ENCODE measurements at regions of chr5 and their contacts with region 1.

Region 1: DNA sequence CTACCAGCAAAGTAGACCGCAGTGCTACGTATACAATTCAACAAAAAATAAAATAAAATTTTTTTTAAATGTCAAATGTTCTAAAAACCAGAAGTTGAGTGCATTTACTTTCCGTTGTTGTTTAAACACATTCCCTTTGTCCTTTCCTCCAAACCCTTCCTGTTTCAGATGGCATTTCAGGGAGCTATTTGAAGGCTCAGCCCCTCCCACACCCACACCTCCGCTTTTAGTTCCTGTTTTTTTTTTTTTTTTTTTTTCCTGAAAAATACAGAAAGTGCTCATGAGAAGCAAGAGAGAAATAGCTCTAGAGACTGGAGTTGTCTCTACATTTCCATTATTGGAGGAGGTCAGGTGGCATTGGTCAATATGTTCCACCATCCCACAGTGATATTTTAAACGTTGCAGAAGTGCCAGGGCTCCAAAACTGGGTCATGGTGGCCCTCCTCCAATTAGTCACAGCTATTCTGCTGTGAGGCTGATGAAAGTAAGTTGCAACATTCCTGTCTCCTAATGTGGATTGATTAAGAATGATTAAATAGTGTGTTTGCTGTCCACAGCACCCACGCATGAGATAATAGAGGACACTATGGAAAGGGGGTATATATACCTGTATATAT is 106.9 kb downstream of the GABRG2 start:
- DNase-seq: no peak

Region 2: DNA sequence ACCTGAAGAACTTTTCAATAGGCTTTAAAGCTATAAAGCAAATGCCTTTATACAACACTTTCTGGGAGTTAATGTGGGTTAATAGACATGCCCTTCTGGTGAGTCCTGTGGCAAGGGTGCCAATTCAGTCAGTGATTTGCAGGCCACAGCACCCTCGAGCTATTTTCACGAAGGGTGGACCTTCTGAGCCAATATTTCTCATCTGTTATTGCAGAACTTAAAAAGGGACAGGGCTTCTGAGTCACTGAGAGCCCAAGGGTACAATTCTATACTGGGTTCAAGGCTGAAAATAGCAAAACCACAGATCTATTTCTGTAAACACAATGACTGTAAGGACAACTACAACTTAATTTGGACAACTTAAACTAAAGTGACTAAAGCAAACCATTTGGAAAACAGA is 14.1 kb before region 1 on chr5:
- intact Hi-C with region 1: loop called in 1 of 2 experiments (anchors 1 kb)
- DNase-seq: no peak

Region 3: DNA sequence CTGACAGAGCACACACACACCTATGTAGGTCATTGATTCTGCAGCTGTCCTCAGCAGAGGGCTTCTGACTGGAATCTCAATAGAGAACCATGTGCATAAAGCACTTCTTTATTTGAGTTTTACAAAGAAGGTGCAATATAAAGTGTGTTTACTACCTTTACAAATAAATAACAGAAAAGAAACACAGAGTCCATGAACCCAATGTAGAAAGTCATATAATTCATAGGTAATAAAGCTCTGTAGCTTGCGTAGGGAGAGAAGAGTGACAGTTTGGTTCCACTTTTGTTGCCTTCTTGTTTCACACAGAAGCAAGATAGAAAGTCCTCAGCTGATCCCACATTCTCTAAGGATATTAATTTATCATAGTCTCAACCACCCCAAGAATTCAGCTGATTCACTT is 42.6 kb after region 1 on chr5:
- intact Hi-C with region 1: no loop called
- DNase-seq: no peak

Region 4: DNA sequence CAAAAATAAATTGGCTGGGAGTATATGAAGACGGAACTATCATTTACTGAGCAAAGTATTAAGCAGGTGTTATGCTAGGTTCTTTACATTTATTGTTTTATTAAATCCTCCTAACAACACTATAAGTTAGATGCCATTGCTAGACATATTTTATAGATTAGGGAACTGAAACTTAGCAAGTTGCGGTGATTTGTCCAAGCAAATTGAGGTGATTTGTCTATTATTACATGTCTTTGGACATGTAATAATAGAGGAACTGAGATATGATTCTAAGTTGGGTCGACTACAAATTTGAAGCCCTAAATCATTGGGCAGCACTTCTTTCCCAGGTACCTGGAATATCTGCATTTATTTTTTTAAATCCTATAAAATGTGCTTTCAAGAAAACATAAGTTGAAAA is 323.0 kb after region 1 on chr5:
- intact Hi-C with region 1: no loop called
- DNase-seq: no peak

Region 5: GRCh38 chr5:163409384-163409783 is 1234.9 kb after region 1 on chr5:
- intact Hi-C with region 1: no loop called
- DNase-seq: no peak

Measured in posterior vena cava (tissue), 2 donors.